ENCODE measurements at regions of chr22 and their contacts with region 1.

Region 1: DNA sequence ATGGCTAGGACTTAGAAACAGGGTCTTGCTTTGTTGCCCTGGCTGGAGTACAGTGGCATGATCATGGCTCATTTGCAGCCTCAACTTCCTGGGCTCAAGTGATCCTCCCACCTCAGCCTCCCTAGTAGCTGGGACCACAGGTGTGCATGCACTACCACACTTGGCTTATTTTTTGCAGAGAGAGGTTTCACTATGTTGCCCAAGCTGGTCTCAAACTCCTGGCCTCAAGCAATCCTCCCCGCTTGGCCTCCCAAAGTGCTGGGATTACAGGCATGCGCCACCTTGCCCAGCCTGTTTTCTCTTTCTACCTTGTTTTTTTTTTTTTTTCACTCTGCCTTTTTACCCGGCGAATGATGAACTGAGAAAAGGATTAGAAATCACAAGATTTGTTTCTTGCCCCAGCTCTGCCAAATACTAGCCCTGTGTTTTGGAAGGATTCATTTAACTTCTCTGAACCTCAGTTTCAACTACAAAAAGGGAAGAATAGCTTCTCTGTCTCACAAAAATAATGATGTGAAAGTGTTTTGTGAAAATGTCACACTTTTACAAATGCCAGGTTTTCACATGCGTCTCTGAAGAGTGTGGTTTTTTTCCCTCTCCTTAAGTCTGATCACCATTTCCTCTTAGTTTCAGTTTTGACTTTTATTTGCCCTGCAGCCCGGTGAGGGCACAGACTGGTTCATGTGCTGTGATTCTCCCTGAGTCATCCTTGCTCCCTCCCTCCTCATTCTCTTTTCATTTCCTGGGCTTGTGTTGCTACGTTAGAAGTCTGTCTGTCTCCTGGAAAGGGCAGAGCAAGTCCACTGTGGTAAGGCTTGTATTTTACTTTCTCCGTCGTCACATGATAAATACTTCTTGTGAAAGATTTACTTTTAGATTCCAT is 67.7 kb downstream of the BCL2L13 start:
- DNase-seq: peak; percentile 93
- H3K4me3 ChIP-seq: peak overlapping the region; percentile 27 to 84 (median 42)
- H3K27ac ChIP-seq: peak overlapping the region; percentile 91
- H3K4me1 ChIP-seq: peaks cover 19% of the 10 kb centered on the region
- H3K27me3 ChIP-seq: no peaks in the 10 kb centered on the region
- CTCF ChIP-seq: no peak
- POLR2A ChIP-seq: peak; percentile 41

Region 2: GRCh38 chr22:17518406-17518805 is 187.9 kb before region 1 on chr22:
- CTCF ChIA-PET with region 1: no interaction called
- POLR2A ChIA-PET with region 1: no interaction called
- dilution Hi-C with region 1: no loop called
- intact Hi-C with region 1: no loop called
- DNase-seq: no peak
- H3K4me3 ChIP-seq: no peak overlapping the region
- H3K27ac ChIP-seq: no peak overlapping the region
- H3K4me1 ChIP-seq: no peaks in the 10 kb centered on the region
- H3K27me3 ChIP-seq: peaks cover 0 to 3% of the 10 kb centered on the region in 2 experiments
- CTCF ChIP-seq: no peak
- POLR2A ChIP-seq: no peak

Region 3: DNA sequence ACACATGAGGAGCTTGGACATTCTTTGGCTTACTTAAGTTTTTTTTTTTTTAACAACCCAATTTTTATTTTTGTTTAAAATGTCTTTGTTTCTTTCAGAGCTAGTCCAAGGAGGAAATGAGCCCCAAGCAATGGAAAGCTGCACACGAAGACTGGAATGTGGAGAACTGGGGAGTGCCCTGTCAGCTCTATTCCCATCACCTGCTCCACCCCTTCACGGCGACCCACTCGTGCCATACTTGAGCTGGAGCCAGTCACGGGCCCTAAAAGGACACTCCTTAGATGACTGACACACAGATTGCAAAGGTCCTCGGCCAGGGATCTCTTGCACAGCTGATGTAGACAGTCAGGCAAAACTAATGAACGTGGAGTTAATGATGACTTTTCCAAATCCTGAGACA is 153.5 kb before region 1 on chr22:
- CTCF ChIA-PET with region 1: no interaction called
- POLR2A ChIA-PET with region 1: no interaction called
- dilution Hi-C with region 1: no loop called
- intact Hi-C with region 1: loop called (anchors 10 kb)
- DNase-seq: no peak
- H3K4me3 ChIP-seq: no peak overlapping the region
- H3K27ac ChIP-seq: no peak overlapping the region
- H3K4me1 ChIP-seq: no peaks in the 10 kb centered on the region
- H3K27me3 ChIP-seq: peaks cover 3 to 4% of the 10 kb centered on the region in 2 experiments
- CTCF ChIP-seq: no peak
- POLR2A ChIP-seq: no peak

Region 4: GRCh38 chr22:17628304-17629166 is 77.7 kb before region 1 on chr22 and contains the start of gene ATP6V1E1:
- CTCF ChIA-PET with region 1: no interaction called
- POLR2A ChIA-PET with region 1: no interaction called
- dilution Hi-C with region 1: no loop called
- intact Hi-C with region 1: loop called (anchors 2 kb)
- DNase-seq: peak; percentile 98
- H3K4me3 ChIP-seq: peak within 1 kb of the TSS; percentile 72 to 93 (median 92)
- H3K27ac ChIP-seq: peak within 1 kb of the TSS; percentile 93
- H3K4me1 ChIP-seq: peaks cover 8% of the 10 kb centered on the region
- H3K27me3 ChIP-seq: no peaks in the 10 kb centered on the region
- CTCF ChIP-seq: no peak
- POLR2A ChIP-seq: peak; percentile 75
- total RNA-seq, gene ATP6V1E1: 113 and 118 TPM in 2 replicates